ENCODE measurements at regions of chr22 and their contacts with region 1.

Region 1: GRCh38 chr22:21947040-21948014 is 5.3 kb downstream of the PPM1F start:
- DNase-seq: no peak
- H3K4me3 ChIP-seq: no peak overlapping the region
- H3K27ac ChIP-seq: no peak overlapping the region
- H3K4me1 ChIP-seq: peaks cover 6% of the 10 kb centered on the region
- H3K27me3 ChIP-seq: no peaks in the 10 kb centered on the region
- CTCF ChIP-seq: peak in 2 of 3 experiments; percentile 37 to 39
- POLR2A ChIP-seq: no peak

Region 2: DNA sequence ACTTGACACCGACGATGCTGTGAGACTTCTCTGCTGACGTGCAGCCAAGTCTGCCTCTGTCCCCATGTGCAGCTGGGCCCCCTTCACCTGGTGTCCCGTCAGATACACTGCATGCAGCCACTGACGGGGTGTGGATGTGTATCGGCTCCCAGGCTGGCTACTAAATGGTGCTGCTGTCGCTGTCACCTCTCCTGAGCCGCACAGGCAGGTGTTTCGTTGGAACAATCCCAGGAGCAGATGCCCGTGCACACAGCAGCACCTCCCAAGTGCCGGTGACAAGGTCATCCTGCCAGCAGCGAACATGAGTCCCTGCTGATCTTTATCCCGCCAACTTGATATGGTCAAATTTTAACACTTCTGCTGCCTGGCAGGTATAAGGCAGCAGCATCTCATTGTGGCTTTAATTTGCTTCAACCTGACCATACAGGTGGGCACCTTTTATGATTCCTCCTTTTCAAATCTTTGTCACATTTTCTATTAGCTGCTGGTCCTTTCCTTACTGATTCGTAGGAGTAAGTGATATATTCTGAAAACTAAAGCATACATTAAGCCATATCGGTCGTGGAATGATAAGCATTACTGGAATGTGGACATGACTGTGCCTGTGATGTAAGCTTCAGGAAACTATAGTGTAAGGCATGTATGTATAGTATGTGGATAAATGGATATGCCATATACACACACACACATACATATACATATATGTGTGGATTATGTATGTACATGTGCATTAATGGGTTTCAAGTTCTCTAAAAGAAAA is 232.7 kb before region 1 on chr22:
- intact Hi-C with region 1: loop called (anchors 5 kb)
- DNase-seq: no peak
- H3K4me3 ChIP-seq: no peak overlapping the region
- H3K27ac ChIP-seq: no peak overlapping the region
- H3K4me1 ChIP-seq: peaks cover 4% of the 10 kb centered on the region
- H3K27me3 ChIP-seq: no peaks in the 10 kb centered on the region
- CTCF ChIP-seq: no peak
- POLR2A ChIP-seq: no peak